Kidney (tissue), 22 donors: ENCODE measurements at regions of chr1 and their contacts with region 1.

Region 1: GRCh38 chr1:27284425-27285273 is 37.3 kb upstream of the TMEM222 start:
- DNase-seq: peak; percentile 85 to 91 (median 87)
- H3K4me3 ChIP-seq: no peak overlapping the region
- H3K27ac ChIP-seq: no peak overlapping the region
- H3K4me1 ChIP-seq: no peaks in the 10 kb centered on the region
- H3K27me3 ChIP-seq: no peaks in the 10 kb centered on the region
- CTCF ChIP-seq: peak; percentile 88

Region 2: GRCh38 chr1:27102707-27103491 is 181.8 kb before region 1 on chr1:
- intact Hi-C with region 1: loop called (anchors 5 kb)
- DNase-seq: peak; percentile 68 to 90 (median 84)
- H3K4me3 ChIP-seq: no peak overlapping the region
- H3K27ac ChIP-seq: no peak overlapping the region
- H3K4me1 ChIP-seq: peaks cover 0 to 4% (median 3%) of the 10 kb centered on the region in 3 donors
- H3K27me3 ChIP-seq: no peaks in the 10 kb centered on the region
- CTCF ChIP-seq: peak; percentile 96

Region 3: GRCh38 chr1:27643701-27644625 is 359.3 kb after region 1 on chr1:
- intact Hi-C with region 1: no loop called
- DNase-seq: peak in 2 of 5 donors; percentile 49 to 58
- H3K4me3 ChIP-seq: no peak overlapping the region
- H3K27ac ChIP-seq: no peak overlapping the region
- H3K4me1 ChIP-seq: peaks cover 0 to 6% (median 0%) of the 10 kb centered on the region in 3 donors
- H3K27me3 ChIP-seq: no peaks in the 10 kb centered on the region
- CTCF ChIP-seq: peak; percentile 76